Posterior cingulate gyrus (tissue), 11 donors: ENCODE measurements at regions of chr5 and their contacts with region 1.

Region 1: GRCh38 chr5:98773464-98774191 is at the start of gene RGMB:
- DNase-seq: peak; percentile 98 to 100 (median 98)

Region 2: GRCh38 chr5:96934708-96935558 is 1838.7 kb before region 1 on chr5:
- intact Hi-C with region 1: loop called (anchors 10 kb)
- DNase-seq: peak; percentile 84 to 98 (median 92)

Region 3: DNA sequence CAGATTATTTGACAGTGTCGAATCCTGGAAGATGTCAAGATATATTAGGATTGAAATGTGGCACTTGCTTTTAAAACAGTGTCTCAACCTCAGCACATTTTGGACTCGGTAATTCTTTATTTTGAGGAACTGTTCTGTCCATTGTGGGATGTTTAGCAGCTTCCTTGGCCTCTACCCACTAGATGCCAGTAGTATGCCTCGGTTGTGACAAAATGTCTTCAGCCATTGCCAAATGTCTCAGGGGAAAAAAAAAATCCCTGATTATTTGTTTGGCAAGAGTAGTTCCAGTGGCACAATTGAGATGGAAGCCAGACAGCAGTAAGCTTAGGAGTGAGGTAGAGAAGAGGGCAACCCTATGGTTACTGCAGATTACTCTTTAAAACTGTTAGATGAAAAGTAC is 896.0 kb before region 1 on chr5:
- intact Hi-C with region 1: loop called (anchors 1 kb)
- DNase-seq: peak in 1 of 10 donors; percentile 34

Region 4: GRCh38 chr5:98928873-98929696 is 155.5 kb after region 1 on chr5 and contains the start of gene CHD1:
- intact Hi-C with region 1: loop called (anchors 10 kb)
- DNase-seq: peak; percentile 86 to 99 (median 92)

Region 5: DNA sequence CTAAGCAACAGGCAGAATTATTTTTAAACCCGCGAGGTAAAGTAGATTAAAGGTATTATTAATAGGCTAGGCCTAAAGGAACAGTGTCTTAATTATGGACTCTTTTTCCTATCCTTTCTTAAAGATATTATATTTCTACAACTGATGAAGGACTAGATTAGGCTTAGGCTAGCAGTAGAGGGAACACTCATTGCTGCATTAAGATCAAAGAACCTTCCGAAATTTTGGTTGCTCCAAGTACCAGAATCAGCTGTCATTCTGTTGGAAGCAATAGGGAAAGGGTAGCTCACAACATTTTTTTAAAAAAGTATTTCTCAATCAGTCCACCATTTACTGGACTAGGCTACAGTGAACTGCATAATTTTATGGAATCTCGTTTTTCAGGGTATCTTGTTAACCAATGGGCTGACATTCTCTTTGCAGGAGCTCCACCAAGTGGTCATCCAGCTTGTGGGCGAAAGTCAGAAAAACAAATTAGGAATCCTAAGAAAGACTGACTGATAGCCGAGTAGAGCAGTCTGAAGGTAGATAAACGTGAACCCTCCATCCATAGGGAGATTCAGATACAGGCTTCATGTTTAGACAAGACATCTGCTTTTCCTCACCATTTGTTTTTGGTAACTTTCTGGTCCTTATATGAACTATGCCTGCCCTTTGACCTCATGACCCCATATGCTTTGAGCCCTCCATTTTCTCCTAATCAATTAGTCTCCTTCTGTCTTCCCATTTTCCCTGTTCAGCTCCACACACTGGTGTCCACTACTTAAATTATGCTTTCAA is 258.8 kb after region 1 on chr5:
- intact Hi-C with region 1: loop called (anchors 10 kb)
- DNase-seq: peak in 6 of 10 donors; percentile 21 to 85 (median 61)